Aorta (tissue), 5 donors: ENCODE measurements at regions of chr9 and their contacts with region 1.

Region 1: DNA sequence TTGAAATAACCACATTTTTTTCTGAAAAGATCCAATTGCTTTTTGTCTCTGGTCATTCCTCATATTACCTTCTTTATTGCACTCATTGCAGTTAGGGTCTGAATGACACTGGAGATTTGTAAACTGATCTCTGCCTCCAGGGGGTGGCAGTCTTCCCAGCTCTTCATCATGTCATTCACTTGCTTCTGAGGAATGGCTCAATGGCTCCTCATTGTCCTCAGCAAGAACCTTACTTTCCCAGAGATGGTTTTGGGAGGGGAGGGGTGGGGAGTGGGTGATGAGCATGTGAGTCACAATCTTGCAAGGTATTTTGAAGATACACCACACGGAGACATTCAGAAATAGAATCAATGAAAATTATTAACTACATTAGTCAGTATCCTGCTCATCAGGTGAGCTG is 159.8 kb upstream of the GAS1 start:
- DNase-seq: no peak
- ATAC-seq: no peak
- H3K4me3 ChIP-seq: no peak overlapping the region
- H3K27ac ChIP-seq: no peak overlapping the region
- H3K4me1 ChIP-seq: peaks cover 4 to 6% of the 10 kb centered on the region in 2 donors
- H3K27me3 ChIP-seq: no peaks in the 10 kb centered on the region

Region 2: GRCh38 chr9:86815015-86815414 is 292.1 kb before region 1 on chr9:
- intact Hi-C with region 1: loop called in 1 of 2 experiments (anchors 5 kb)
- DNase-seq: no peak
- ATAC-seq: no peak
- H3K4me3 ChIP-seq: no peak overlapping the region
- H3K27ac ChIP-seq: no peak overlapping the region
- H3K4me1 ChIP-seq: no peaks in the 10 kb centered on the region
- H3K27me3 ChIP-seq: no peaks in the 10 kb centered on the region

Region 3: DNA sequence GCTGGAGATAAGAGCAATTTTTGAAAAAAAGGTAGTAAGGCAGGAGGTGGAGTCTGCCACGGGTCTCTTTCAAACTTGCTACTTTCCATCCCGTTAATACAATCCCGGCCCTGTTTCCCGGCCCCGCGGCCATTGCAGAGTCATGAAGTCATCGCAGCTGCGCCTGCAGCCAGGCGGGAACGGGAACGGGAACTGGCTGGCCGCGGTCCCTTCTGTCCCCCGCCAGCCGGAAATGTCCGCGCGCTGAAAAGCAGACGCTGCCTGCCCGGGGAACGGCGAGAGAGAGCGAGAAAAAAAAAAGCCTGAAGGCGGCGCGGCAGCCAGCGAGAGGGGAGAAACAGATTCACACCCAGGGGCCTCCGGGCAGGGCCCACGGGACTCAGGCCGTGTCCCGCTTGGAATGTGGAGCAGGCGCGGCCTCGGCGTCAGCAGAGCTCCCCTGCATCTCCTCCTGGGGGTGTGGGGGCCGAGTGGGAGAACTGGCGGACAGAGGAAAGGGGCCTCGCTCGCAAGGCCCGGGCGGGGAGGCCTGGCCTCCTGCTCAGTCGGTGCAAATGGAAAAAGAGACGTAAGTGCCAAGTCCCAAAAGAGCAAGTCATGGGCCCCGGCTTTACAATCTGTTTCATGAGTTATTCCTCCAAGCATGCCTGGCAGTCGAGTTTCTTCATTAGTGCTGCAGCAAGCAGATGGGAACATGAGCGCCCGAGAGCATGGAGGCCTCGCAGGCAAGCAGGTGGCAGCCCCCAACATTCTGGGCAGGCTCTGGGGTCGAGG is 41.4 kb after region 1 on chr9:
- intact Hi-C with region 1: loop called in 1 of 2 experiments (anchors 5 kb)
- DNase-seq: peak; percentile 94 to 95
- ATAC-seq: peak; percentile 95
- H3K4me3 ChIP-seq: no peak overlapping the region
- H3K27ac ChIP-seq: peak overlapping the region; percentile 98 to 99
- H3K4me1 ChIP-seq: peaks cover 0 to 3% of the 10 kb centered on the region in 2 donors
- H3K27me3 ChIP-seq: no peaks in the 10 kb centered on the region